ENCODE measurements at regions of chr14 and their contacts with region 1.

Region 1: GRCh38 chr14:73728717-73729330 is 14.6 kb upstream of the PNMA1 start:
- DNase-seq: peak; percentile 90
- H3K4me3 Mint-ChIP-seq: no peak overlapping the region
- H3K27ac Mint-ChIP-seq: peak overlapping the region; percentile 78
- H3K4me1 Mint-ChIP-seq: peaks cover 35% of the 10 kb centered on the region
- H3K27me3 Mint-ChIP-seq: no peaks in the 10 kb centered on the region

Region 2: GRCh38 chr14:73746520-73747378 is 17.9 kb after region 1 on chr14:
- CTCF ChIA-PET with region 1: interaction called, 63 read pairs
- POLR2A ChIA-PET with region 1: no interaction called
- intact Hi-C with region 1: no loop called
- DNase-seq: no peak
- H3K4me3 Mint-ChIP-seq: no peak overlapping the region
- H3K27ac Mint-ChIP-seq: peak overlapping the region; percentile 51
- H3K4me1 Mint-ChIP-seq: peaks cover 95% of the 10 kb centered on the region
- H3K27me3 Mint-ChIP-seq: no peaks in the 10 kb centered on the region

Region 3: DNA sequence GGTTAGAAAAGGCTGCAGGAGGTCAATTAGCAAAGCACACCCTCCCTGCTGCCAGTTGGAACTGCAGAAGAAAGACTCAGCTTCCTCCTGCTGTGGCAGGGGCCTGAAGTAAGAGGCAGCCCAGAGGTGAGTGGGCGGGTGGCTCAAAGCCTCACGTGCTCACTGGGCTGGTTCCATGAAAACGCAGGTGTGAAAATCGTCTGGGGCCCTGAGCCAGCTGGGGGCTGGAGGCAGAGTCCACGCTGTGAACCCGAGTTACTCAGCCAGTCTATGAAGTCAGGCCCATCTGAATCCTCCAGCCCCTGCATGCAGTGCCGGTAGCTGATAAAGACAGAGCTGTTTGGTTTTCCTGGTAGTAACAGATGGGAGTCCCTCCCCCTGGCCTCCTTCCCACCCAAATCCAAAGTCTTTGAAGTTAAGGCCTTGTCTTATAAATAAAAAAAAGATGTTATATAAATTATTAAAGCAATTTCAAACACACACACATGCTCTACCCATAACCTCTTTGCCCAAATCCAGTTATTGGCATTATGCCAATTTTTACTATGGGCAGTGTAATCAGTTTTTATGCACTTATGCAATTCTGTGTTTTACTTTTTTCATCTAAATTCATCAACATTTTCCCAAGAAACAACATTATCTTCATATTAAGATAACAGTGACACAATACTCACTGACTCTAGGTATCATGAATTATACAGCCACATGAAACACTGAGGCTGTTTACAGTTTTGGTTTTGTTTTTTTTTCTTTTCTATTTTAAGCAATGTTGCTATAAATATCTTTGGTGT is 43.2 kb after region 1 on chr14:
- CTCF ChIA-PET with region 1: interaction called, 16 read pairs
- POLR2A ChIA-PET with region 1: no interaction called
- intact Hi-C with region 1: no loop called
- DNase-seq: peak; percentile 93
- H3K4me3 Mint-ChIP-seq: peak overlapping the region; percentile 55
- H3K27ac Mint-ChIP-seq: peak overlapping the region; percentile 90
- H3K4me1 Mint-ChIP-seq: peaks cover 66% of the 10 kb centered on the region
- H3K27me3 Mint-ChIP-seq: no peaks in the 10 kb centered on the region

Region 4: DNA sequence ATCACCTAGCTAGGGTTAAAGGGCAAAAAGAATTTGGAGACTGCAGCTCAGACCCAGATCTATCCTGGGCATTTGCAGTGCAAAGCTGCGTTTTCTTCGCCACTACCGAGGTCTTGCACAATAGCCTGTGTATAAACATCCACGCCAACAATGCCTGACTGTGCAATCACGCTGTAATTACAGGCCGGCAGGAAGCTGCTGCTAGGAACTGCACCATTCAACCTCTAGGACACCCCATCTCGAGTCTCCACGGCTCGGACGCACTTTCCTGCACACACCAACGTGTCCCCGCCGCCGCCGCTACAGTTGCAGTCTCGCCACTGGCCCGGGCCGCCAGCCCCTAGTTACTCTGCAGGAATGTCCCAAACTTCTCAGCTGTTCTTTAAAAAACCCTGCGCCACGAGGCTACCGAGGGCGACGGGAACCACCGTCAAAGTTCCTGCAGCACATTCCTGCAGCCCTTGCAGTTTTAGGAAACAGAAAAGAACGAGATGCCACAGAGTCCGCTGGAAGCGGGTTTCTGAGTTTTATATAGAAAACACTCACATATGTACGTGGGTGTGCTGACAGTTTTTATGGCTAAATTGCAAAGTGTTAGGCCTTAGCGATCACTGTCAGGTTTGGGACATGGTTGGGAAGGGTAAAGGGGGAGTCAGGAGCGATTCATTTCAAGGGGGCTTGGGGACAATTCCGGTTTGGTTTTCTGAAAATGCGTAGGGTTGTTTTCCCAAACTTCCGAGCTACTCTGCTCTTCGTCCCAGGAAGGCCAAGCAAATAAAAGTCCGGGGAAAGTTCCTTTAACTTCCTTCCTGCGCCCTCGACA is 57.3 kb after region 1 on chr14:
- CTCF ChIA-PET with region 1: interaction called, 27 read pairs
- POLR2A ChIA-PET with region 1: no interaction called
- intact Hi-C with region 1: no loop called
- DNase-seq: peak; percentile 80
- H3K4me3 Mint-ChIP-seq: peak overlapping the region; percentile 90
- H3K27ac Mint-ChIP-seq: peak overlapping the region; percentile 93
- H3K4me1 Mint-ChIP-seq: peaks cover 56% of the 10 kb centered on the region
- H3K27me3 Mint-ChIP-seq: no peaks in the 10 kb centered on the region

Region 5: DNA sequence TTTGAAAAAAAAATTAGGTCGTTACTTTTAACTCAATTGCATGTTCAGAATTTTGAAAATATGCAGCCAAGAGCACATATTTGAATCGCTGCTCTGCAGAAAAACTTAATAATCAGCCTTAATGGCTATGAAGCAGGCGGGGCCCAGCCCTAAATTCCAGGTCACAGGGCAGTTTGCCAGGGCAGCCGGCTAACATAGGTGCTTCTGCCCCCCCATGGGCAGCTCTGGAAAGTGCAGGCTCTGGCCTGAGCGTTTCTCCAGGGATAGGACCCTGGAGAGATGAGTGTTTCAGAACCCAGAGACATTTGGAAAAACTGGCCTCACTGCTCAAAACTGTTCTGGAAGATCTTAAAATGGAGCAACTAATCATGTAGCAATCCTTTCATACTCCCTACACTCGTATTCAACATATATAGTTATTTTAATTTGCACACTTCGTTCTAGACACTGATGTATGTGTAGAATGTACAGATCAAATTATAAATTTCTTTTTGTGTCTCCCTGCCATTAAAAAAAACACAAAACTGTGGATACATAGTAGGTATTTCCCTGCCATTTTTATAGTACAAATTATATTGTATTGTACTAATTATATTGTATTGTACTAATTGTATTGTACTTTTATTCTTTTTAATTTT is 96.8 kb after region 1 on chr14:
- CTCF ChIA-PET with region 1: interaction called, 181 read pairs
- POLR2A ChIA-PET with region 1: interaction called, 3 read pairs
- intact Hi-C with region 1: loop called (anchors 1 kb)
- DNase-seq: peak; percentile 87
- H3K4me3 Mint-ChIP-seq: no peak overlapping the region
- H3K27ac Mint-ChIP-seq: no peak overlapping the region
- H3K4me1 Mint-ChIP-seq: peaks cover 15% of the 10 kb centered on the region
- H3K27me3 Mint-ChIP-seq: no peaks in the 10 kb centered on the region

Measured in activated CD4-positive, alpha-beta memory T cell treated with anti-CD3 and anti-CD28 coated beads for 36 hours (primary cell).